ENCODE measurements at regions of chr22 and their contacts with region 1.

Region 1: GRCh38 chr22:41800348-41801146 is at the start of gene CCDC134:
- DNase-seq: peak; percentile 98
- H3K4me3 Mint-ChIP-seq: peak within 1 kb of the TSS; percentile 94
- H3K27ac Mint-ChIP-seq: peak within 1 kb of the TSS; percentile 97
- H3K4me1 Mint-ChIP-seq: peaks cover 39% of the 10 kb centered on the region
- H3K27me3 Mint-ChIP-seq: no peaks in the 10 kb centered on the region
- total RNA-seq, gene CCDC134: 19.7 TPM in 2 replicates

Region 2: GRCh38 chr22:41285820-41286638 is 514.5 kb before region 1 on chr22 and contains the start of gene RANGAP1:
- intact Hi-C with region 1: no loop called
- DNase-seq: peak; percentile 99
- H3K4me3 Mint-ChIP-seq: peak within 1 kb of the TSS; percentile 94
- H3K27ac Mint-ChIP-seq: peak within 1 kb of the TSS; percentile 97
- H3K4me1 Mint-ChIP-seq: peaks cover 28% of the 10 kb centered on the region
- H3K27me3 Mint-ChIP-seq: no peaks in the 10 kb centered on the region
- total RNA-seq, gene RANGAP1: 185 and 187 TPM in 2 replicates

Region 3: DNA sequence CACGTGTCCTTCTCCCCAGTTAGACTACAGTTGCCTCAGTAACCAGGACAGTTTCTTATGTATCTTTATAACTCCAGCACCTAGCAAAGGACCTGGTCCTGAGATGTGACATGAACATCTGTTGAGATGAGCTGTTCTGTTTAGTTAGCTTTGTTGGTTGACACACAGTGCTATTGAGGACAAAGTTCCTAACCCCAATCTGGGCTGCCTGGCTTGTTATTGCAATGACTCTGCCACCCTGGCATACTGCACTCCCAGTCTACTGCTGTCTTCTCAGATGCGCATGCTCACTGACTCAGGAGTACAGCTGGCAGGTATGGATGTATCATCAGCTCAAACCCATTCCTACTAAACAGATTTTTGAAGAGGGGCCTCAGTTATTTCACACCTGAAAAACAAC is 187.1 kb before region 1 on chr22:
- intact Hi-C with region 1: no loop called
- DNase-seq: no peak
- H3K4me3 Mint-ChIP-seq: no peak overlapping the region
- H3K27ac Mint-ChIP-seq: no peak overlapping the region
- H3K4me1 Mint-ChIP-seq: peaks cover 8% of the 10 kb centered on the region
- H3K27me3 Mint-ChIP-seq: no peaks in the 10 kb centered on the region

Region 4: GRCh38 chr22:41666661-41667258 is 133.8 kb before region 1 on chr22:
- intact Hi-C with region 1: no loop called
- DNase-seq: peak; percentile 99
- H3K4me3 Mint-ChIP-seq: peak overlapping the region; percentile 83
- H3K27ac Mint-ChIP-seq: peak overlapping the region; percentile 92
- H3K4me1 Mint-ChIP-seq: peaks cover 9% of the 10 kb centered on the region
- H3K27me3 Mint-ChIP-seq: no peaks in the 10 kb centered on the region

Region 5: DNA sequence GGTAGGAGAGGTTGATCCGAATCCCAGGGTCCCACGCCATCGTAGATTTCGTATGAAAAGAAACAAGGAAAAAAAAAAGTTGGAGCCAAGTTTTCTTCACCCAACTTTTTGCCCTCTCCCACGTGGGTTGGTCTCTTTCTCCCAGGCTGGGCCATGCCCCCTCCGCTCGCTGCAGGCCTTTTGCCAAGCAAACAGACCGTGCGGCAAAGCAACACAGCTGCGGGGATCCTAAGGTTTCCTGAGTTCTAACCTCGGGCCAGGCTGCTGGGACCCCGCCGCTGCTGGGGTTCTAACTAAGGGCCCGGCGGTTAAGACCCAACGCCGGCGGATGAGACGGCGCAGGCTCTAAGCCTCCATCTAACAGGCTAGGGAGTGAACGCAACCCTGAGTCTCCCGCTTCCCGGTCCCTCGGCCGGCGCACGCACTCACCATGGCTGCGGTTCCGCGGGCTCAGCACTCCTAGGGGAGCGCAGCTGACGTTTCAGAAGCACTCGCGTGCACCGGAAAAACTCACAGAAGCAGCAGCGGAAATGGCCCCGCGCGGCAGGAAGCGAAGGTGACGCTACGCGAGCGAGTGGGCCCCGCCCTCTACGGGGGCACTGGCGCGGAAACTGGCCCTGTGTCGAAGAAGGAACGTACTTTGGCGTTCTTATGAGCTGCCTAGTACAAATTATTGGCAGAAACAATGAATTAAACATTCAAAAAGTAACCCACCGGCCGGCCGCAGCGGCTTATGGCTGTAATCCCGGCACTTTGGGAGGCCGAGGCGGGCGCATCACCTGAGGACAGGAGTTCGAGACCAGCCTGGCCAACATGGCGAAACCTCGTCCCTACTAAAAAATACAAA is 112.0 kb before region 1 on chr22 and contains the start of gene SNU13:
- intact Hi-C with region 1: loop called (anchors 2 kb)
- DNase-seq: peak; percentile 98
- H3K4me3 Mint-ChIP-seq: peak within 1 kb of the TSS; percentile 94
- H3K27ac Mint-ChIP-seq: peak within 1 kb of the TSS; percentile 97
- H3K4me1 Mint-ChIP-seq: peaks cover 19% of the 10 kb centered on the region
- H3K27me3 Mint-ChIP-seq: no peaks in the 10 kb centered on the region
- total RNA-seq, gene SNU13: 343 and 345 TPM in 2 replicates

Region 6: GRCh38 chr22:41746567-41747400 is 53.8 kb before region 1 on chr22:
- intact Hi-C with region 1: loop called (anchors 5 kb)
- DNase-seq: peak; percentile 88
- H3K4me3 Mint-ChIP-seq: no peak overlapping the region
- H3K27ac Mint-ChIP-seq: no peak overlapping the region
- H3K4me1 Mint-ChIP-seq: peaks cover 6% of the 10 kb centered on the region
- H3K27me3 Mint-ChIP-seq: peaks cover 41% of the 10 kb centered on the region

Region 7: DNA sequence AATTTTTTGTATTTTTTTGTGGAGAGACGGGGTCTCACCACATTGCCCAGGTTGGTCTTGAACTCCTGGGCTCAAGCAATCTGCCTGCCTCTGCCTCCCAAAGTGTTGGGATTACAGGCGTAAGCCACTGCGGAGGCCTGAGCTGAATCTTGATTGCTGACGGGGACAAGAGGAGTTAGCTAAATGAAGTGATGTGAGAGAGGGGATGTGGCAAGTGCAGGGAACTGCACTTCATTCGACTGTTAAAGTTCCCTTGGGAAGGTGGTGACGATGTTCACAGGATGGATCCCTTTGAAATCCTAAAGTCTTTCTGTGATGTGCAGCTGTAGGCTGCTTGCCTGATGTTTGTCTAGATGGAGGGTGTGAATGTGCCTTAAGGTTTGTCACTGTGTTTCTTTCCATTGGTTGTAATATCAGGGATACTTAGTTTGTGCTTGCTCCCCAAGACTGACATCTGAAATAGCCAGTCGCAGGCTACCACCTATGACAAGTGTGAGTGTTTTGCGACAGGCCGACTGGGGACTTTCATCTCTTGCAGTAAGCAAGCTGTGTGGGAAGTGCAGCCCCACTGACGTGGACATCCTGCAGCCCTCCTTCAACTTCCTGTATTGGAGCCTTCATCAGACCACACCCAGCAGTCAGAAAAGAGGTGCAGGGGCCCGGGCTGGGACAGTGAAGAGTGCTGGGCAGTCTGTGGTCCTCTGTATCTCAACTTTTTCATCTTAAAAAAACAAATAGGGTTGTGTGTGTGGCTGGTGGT is 19.6 kb before region 1 on chr22:
- intact Hi-C with region 1: loop called (anchors 1 kb)
- DNase-seq: peak; percentile 97
- H3K4me3 Mint-ChIP-seq: peak overlapping the region; percentile 83
- H3K27ac Mint-ChIP-seq: peak overlapping the region; percentile 97
- H3K4me1 Mint-ChIP-seq: peaks cover 36% of the 10 kb centered on the region
- H3K27me3 Mint-ChIP-seq: no peaks in the 10 kb centered on the region

Region 8: GRCh38 chr22:41816181-41816621 is 15.7 kb after region 1 on chr22:
- intact Hi-C with region 1: no loop called
- DNase-seq: no peak
- H3K4me3 Mint-ChIP-seq: no peak overlapping the region
- H3K27ac Mint-ChIP-seq: no peak overlapping the region
- H3K4me1 Mint-ChIP-seq: peaks cover 4% of the 10 kb centered on the region
- H3K27me3 Mint-ChIP-seq: no peaks in the 10 kb centered on the region

Measured in activated CD4-positive, alpha-beta T cell treated with anti-CD3 and anti-CD28 coated beads, Interleukin-2, amount 10 ng/mL, durations not matched to agents 24 days and 14 days (primary cell).